ENCODE measurements at regions of chr9 and their contacts with region 1.

Region 1: GRCh38 chr9:127586537-127586936 is 25.5 kb upstream of the STXBP1 start:
- DNase-seq: no peak
- ATAC-seq: peak; percentile 88
- H3K4me3 ChIP-seq: no peak overlapping the region
- H3K27ac ChIP-seq: no peak overlapping the region
- H3K4me1 ChIP-seq: peaks cover 5 to 24% of the 10 kb centered on the region in 2 experiments; a peak in 3 of 4 replicates
- H3K27me3 ChIP-seq: no peaks in the 10 kb centered on the region
- CTCF ChIP-seq: peak in 2 of 3 experiments; percentile 82 to 87; a peak in 4 of 6 replicates
- POLR2A ChIP-seq: no peak
- RAD21 ChIP-seq: no peak

Region 2: DNA sequence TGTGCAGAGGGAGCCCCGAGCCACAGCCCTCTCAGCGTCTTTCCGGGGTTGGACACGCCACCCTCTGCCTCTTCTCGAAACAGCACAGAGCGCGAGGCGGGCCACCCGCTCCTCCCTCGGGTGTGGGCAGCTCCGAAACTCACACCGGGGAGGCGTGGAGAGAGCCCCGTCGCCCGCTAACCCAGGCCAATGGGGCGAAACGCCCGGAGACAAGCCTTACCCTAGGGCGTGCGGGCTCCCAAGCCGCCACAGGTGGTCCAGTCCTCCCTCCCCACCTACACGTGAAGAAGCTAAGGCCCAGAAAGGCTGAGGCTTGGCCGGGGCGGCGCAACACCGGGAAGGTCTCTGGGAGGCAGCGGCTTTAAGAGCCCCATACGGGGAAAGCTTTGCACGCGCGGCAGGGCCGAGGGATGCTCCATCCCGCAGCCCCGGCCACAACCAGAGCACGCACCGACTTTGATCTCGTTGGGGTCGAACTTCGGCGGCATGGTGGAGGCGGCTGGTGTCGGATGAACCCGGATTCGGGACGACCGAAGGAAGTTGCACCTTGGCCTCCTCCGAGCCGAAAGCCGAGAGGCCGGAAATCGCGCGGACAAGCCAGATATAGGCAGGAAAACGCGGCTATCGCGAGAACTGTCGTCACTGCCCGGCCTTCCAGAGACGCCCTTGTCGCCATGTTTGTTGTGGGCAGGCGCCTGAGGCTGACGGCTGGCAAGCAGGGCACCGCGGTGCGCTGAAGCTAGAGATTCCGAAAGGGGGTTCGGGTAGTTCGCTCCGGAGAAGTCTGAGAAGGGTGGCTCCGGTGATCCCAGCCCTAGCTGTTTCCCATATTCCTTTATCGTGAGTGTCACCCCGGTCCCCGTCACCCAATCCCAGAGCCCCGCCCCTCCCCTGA is 135.5 kb before region 1 on chr9 and contains the starts of genes LRSAM1 and RPL12:
- CTCF ChIA-PET with region 1: no interaction called
- POLR2A ChIA-PET with region 1: no interaction called
- RAD21 ChIA-PET with region 1: no interaction called
- intact Hi-C with region 1: loop called (anchors 5 kb)
- DNase-seq: peak; percentile 88
- ATAC-seq: peak; percentile 60
- H3K4me3 ChIP-seq: peak within 1 kb of the TSS; percentile 87 to 98
- H3K27ac ChIP-seq: peak within 1 kb of the TSS; percentile 97
- H3K4me1 ChIP-seq: peaks cover 11 to 52% of the 10 kb centered on the region in 2 experiments
- H3K27me3 ChIP-seq: no peaks in the 10 kb centered on the region
- CTCF ChIP-seq: no peak
- POLR2A ChIP-seq: peak; percentile 99
- RAD21 ChIP-seq: no peak
- total RNA-seq, gene LRSAM1: 25.9 TPM
- total RNA-seq, gene RPL12: 2,679 TPM

Region 3: GRCh38 chr9:127503947-127504782 is 82.4 kb before region 1 on chr9:
- CTCF ChIA-PET with region 1: interaction called, 22 read pairs
- POLR2A ChIA-PET with region 1: no interaction called
- RAD21 ChIA-PET with region 1: no interaction called
- intact Hi-C with region 1: loop called (anchors 1 kb)
- DNase-seq: peak; percentile 62
- ATAC-seq: peak; percentile 83
- H3K4me3 ChIP-seq: no peak overlapping the region
- H3K27ac ChIP-seq: peak overlapping the region; percentile 45
- H3K4me1 ChIP-seq: 0 out of 4 replicates have a peak, but pooled peaks cover 0 to 4% of the 10 kb centered on the region in 2 experiments
- H3K27me3 ChIP-seq: no peaks in the 10 kb centered on the region
- CTCF ChIP-seq: peak; percentile 89 to 93 (median 90)
- POLR2A ChIP-seq: no peak
- RAD21 ChIP-seq: peak; percentile 98

Region 4: GRCh38 chr9:127525401-127526187 is 60.9 kb before region 1 on chr9:
- CTCF ChIA-PET with region 1: interaction called, 22 read pairs
- POLR2A ChIA-PET with region 1: interaction called, 3 read pairs
- RAD21 ChIA-PET with region 1: interaction called, 3 to 12 read pairs
- intact Hi-C with region 1: no loop called
- DNase-seq: peak; percentile 54
- ATAC-seq: peak; percentile 64
- H3K4me3 ChIP-seq: no peak overlapping the region
- H3K27ac ChIP-seq: no peak overlapping the region
- H3K4me1 ChIP-seq: peaks cover 0 to 18% of the 10 kb centered on the region in 2 experiments; a peak in 1 of 4 replicates
- H3K27me3 ChIP-seq: no peaks in the 10 kb centered on the region
- CTCF ChIP-seq: peak in 2 of 3 experiments; percentile 70 to 73; a peak in 5 of 6 replicates
- POLR2A ChIP-seq: no peak
- RAD21 ChIP-seq: peak; percentile 65

Region 5: GRCh38 chr9:127785023-127785932 is 198.7 kb after region 1 on chr9:
- CTCF ChIA-PET with region 1: no interaction called
- POLR2A ChIA-PET with region 1: no interaction called
- RAD21 ChIA-PET with region 1: interaction called in 1 of 2 experiments, 3 read pairs
- intact Hi-C with region 1: loop called (anchors 2 kb)
- DNase-seq: peak; percentile 60
- ATAC-seq: peak; percentile 67
- H3K4me3 ChIP-seq: peak overlapping the region; percentile 45 to 90
- H3K27ac ChIP-seq: peak overlapping the region; percentile 98
- H3K4me1 ChIP-seq: peaks cover 11 to 14% of the 10 kb centered on the region in 2 experiments; a peak in 3 of 4 replicates
- H3K27me3 ChIP-seq: no peaks in the 10 kb centered on the region
- CTCF ChIP-seq: peak in 2 of 3 experiments; percentile 75 to 81; a peak in 4 of 6 replicates
- POLR2A ChIP-seq: no peak
- RAD21 ChIP-seq: no peak

Region 6: DNA sequence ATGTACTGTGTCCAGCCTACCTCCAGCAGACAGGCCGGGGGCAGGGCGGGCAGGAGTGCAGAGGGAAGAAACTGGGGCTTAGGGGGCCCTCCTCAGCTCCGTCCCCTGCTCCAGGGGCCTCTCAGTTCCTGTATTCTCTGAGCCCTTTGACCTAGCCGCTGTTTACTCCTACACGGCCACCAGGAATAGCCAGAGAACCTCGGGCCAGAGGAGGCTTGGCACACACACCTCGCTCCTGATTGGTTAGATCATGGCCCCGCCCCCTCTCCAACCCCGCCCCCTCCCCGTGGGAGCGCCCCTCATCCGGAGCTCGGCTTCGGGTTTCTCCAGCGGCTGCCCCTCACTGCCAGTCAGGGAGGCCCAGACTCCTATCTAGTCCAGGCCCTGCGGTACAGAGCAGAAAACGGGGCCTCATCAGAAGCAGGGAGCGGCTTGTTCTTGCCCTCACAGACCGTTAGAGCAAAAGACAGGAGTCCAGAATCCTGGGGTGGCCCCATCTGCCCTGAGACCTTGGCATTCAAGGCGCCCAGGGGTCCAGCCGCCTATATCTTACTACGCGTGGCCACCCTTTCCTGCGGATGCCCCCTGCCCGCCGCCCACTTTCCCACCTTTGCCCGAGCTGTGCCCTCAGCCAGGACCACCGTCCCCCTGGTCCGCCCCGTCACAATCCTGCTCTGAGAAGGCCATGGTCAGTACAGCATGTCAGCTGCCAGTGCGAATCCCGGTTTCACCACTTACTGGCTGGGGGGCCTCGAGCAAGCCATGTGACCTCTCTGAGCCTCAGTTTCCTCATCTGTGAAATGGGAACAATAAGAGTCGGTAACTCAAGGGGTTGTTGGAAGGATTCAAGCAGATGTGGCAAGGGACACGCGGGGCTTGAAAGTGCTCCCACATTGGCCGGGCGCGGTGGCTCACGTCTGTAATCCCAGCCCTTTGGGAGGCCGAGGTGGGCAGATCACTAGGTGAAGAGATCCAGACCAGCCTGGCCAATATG is 311.0 kb after region 1 on chr9:
- CTCF ChIA-PET with region 1: no interaction called
- POLR2A ChIA-PET with region 1: no interaction called
- RAD21 ChIA-PET with region 1: no interaction called
- intact Hi-C with region 1: no loop called
- DNase-seq: no peak
- ATAC-seq: peak; percentile 67
- H3K4me3 ChIP-seq: peak overlapping the region in 1 of 2 experiments; percentile 4; a peak in 1 of 4 replicates
- H3K27ac ChIP-seq: peak overlapping the region; percentile 53; the same call in 1 of the 2 replicates
- H3K4me1 ChIP-seq: peaks cover 25 to 42% of the 10 kb centered on the region in 2 experiments
- H3K27me3 ChIP-seq: no peaks in the 10 kb centered on the region
- CTCF ChIP-seq: no peak
- POLR2A ChIP-seq: no peak
- RAD21 ChIP-seq: no peak

Region 7: GRCh38 chr9:128628471-128629048 is 1042.0 kb after region 1 on chr9:
- CTCF ChIA-PET with region 1: no interaction called
- POLR2A ChIA-PET with region 1: no interaction called
- RAD21 ChIA-PET with region 1: no interaction called
- intact Hi-C with region 1: no loop called
- DNase-seq: no peak
- ATAC-seq: peak; percentile 60
- H3K4me3 ChIP-seq: no peak overlapping the region
- H3K27ac ChIP-seq: no peak overlapping the region; the same call in 1 of the 2 replicates
- H3K4me1 ChIP-seq: peaks cover 0 to 10% of the 10 kb centered on the region in 2 experiments; a peak in 2 of 4 replicates
- H3K27me3 ChIP-seq: no peaks in the 10 kb centered on the region
- CTCF ChIP-seq: no peak
- POLR2A ChIP-seq: no peak
- RAD21 ChIP-seq: no peak